WTC11 (cell line): ENCODE measurements at regions of chr2 and their contacts with region 1.

Region 1: DNA sequence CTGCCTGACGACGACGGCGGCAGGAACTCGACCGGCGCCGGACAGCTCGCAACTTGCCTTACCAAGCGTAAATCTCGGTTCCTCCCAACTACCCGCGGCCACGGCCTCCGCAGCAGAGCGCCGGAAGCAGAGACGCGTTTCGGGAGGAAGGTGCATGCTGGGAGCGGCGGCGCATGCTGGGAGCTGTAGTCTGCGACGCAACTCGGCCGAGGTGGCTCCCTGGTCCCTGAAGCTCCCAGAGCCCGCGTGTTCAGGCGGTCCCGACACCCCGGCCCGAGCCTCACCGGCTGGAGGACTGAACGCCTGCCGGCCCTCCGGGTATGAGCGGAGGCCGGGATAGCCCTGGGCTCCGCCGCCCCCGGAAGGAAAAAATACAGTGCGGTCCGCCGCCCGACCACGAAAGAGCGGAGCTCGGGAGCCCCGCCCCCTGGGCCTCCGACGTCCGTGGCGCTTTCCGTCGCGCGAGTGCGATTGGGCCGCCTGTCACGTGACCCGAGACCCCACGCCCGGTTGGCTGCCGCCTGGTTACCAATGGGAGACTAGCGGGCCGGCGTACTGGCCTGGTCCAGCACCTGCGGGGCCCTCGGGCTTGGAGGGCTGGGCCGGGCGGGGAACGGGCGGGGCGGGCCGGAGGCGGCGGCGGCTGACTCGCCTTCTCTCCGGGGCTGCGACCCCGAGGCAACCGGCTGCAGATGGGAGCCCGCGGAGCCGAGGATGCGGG is at the start of gene CAPN10:
- DNase-seq: peak; percentile 97
- ATAC-seq: peak; percentile 82
- H3K4me3 Mint-ChIP-seq: peak within 1 kb of the TSS; percentile 97
- H3K27ac Mint-ChIP-seq: peak within 1 kb of the TSS; percentile 86
- H3K4me1 Mint-ChIP-seq: peaks cover 32% of the 10 kb centered on the region
- H3K27me3 Mint-ChIP-seq: no peaks in the 10 kb centered on the region
- CTCF ChIP-seq: no peak
- total RNA-seq, gene CAPN10: 51.4 to 61.3 TPM (median 54.6 TPM) in 3 replicates

Region 2: DNA sequence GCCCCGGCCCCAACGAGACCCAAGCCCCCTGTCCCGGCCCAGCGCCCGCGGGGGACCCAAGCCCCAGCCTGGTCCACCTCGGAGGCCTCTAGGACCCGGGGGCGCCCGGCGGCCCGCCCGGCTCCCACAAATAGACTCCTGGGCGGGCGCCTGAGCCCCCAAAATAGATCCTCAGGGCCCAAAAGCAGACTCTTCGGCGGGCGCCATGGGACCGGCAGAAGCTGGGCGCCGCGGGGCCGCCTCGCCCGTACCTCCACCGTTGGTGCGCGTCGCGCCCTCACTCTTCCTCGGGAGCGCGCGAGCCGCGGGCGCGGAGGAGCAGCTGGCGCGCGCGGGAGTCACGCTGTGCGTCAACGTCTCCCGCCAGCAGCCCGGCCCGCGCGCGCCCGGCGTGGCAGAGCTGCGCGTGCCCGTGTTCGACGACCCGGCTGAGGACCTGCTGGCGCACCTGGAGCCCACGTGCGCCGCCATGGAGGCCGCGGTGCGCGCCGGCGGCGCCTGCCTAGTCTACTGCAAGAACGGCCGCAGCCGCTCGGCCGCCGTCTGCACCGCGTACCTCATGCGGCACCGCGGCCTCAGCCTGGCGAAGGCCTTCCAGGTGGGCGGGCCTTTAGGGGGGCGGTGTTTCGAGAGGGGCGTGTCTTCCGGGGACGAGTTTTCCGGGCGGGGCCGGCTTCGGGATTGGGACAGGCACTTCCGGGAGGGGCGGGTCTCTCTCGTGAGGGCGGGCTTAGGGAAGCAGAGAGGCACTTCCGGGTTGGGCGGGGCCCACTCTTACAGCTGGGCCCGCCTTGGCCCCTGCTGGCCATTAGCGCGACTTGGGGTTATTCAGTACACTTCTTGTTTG is 25.7 kb before region 1 on chr2:
- CTCF ChIA-PET with region 1: interaction called, 40 read pairs
- POLR2A ChIA-PET with region 1: interaction called, 6 read pairs
- DNase-seq: peak; percentile 100
- ATAC-seq: peak; percentile 77
- H3K4me3 Mint-ChIP-seq: peak overlapping the region; percentile 76
- H3K27ac Mint-ChIP-seq: no peak overlapping the region
- H3K4me1 Mint-ChIP-seq: peaks cover 33% of the 10 kb centered on the region
- H3K27me3 Mint-ChIP-seq: peaks cover 32% of the 10 kb centered on the region
- CTCF ChIP-seq: no peak

Region 3: DNA sequence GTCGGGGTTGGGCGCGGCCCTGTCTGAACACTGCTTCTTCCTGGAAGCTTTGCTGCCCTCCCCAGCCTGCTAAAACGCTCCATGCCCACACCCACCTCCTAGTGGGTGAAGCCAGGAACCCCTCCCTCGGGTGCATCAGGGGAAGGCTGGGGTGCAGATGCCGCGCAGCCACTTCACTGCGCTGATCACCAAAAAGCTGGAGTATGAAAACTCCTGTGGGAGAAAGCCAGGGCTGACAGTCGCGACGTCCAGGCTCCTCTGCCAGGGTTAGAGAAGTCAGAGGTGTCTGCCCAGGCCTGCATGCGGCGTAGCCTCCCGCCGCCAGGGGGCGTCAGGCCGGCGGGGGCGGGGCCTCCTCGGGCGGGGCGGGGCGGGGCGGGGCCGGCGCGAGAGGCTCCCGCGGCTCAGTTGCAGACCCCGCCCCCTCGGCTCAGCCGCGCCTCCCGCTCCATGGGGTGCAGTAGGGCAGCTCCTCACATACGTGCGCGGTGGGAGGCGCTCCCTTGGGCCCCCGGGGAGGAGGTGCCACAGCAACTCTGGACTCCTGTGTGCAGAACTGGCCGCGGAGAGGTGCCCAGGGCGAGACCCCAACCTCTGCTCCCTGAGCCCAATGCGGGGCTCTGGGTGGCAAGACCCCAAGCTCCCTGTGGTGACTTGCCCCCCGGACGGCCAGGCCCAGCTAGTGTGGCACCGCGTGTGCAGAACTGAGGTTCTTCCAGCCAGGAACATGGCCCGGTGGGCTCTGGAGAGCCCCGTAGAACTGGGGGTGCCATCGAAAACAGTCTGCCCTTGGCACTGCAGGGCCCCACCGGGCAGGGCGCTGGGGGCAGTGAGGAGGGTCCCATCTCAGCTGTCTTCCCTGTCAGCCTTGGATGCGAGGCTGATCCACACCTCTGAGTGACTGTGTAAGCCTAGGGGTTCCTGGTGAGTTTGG is 19.9 kb before region 1 on chr2:
- CTCF ChIA-PET with region 1: interaction called, 40 read pairs
- POLR2A ChIA-PET with region 1: interaction called, 3 read pairs
- DNase-seq: peak; percentile 86
- ATAC-seq: peak; percentile 67
- H3K4me3 Mint-ChIP-seq: peak overlapping the region; percentile 69
- H3K27ac Mint-ChIP-seq: no peak overlapping the region
- H3K4me1 Mint-ChIP-seq: peaks cover 25% of the 10 kb centered on the region
- H3K27me3 Mint-ChIP-seq: peaks cover 28% of the 10 kb centered on the region
- CTCF ChIP-seq: peak; percentile 94

Region 4: DNA sequence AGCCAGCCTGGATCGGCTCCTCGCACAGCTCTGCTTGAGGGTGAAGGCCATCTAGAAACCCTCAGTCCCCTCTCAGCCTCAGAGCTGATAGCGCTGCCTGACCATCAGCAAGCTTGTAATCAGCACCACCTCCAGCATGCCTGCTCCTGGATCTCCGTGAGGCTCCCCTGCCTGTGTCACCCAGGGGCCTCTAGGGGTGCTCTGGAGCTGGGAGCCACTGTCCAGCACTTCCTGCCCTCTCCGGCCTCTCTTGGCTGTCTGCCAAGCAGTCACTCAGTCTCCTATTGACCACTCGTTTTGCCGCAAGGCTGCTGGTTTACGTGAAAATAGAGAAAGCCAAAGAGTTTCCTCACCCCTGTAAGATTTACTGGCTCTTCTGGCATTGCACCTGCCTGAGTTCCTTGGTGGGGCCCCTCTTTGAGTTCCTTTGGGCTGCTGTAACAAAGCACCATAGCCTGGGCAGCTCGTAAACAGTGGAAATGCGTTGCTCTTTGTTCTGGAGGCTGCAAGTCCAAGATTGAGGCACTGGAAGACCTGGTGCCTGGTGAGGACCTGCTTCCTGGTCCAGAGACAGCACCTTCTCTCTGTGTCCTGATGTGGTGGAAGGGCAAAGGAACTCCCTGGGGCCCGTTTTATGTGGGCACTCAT is 18.1 kb after region 1 on chr2:
- CTCF ChIA-PET with region 1: interaction called, 12 read pairs
- POLR2A ChIA-PET with region 1: interaction called, 5 read pairs
- DNase-seq: peak; percentile 71
- ATAC-seq: peak; percentile 93
- H3K4me3 Mint-ChIP-seq: no peak overlapping the region
- H3K27ac Mint-ChIP-seq: no peak overlapping the region
- H3K4me1 Mint-ChIP-seq: no peaks in the 10 kb centered on the region
- H3K27me3 Mint-ChIP-seq: no peaks in the 10 kb centered on the region; the same call in 1 of the 2 replicates
- CTCF ChIP-seq: 0 out of 2 replicates have a peak, but pooled peaks have one; percentile 23

Region 5: GRCh38 chr2:240704651-240705050 is 118.3 kb after region 1 on chr2:
- CTCF ChIA-PET with region 1: no interaction called
- POLR2A ChIA-PET with region 1: no interaction called
- DNase-seq: no peak
- ATAC-seq: no peak
- H3K4me3 Mint-ChIP-seq: no peak overlapping the region
- H3K27ac Mint-ChIP-seq: no peak overlapping the region
- H3K4me1 Mint-ChIP-seq: no peaks in the 10 kb centered on the region
- H3K27me3 Mint-ChIP-seq: no peaks in the 10 kb centered on the region
- CTCF ChIP-seq: no peak

Region 6: GRCh38 chr2:241443486-241444223 is 857.3 kb after region 1 on chr2:
- CTCF ChIA-PET with region 1: no interaction called
- POLR2A ChIA-PET with region 1: no interaction called
- DNase-seq: no peak
- ATAC-seq: no peak
- H3K4me3 Mint-ChIP-seq: no peak overlapping the region
- H3K27ac Mint-ChIP-seq: no peak overlapping the region
- H3K4me1 Mint-ChIP-seq: no peaks in the 10 kb centered on the region
- H3K27me3 Mint-ChIP-seq: no peaks in the 10 kb centered on the region
- CTCF ChIP-seq: no peak